Common myeloid progenitor, CD34-positive (primary cell): ENCODE measurements at regions of chr11 and their contacts with region 1.

Region 1: GRCh38 chr11:96464700-96465307 is 75.0 kb downstream of the JRKL start:
- DNase-seq: peak; percentile 66 to 81 (median 77)
- H3K4me3 ChIP-seq: peak overlapping the region in 2 of 7 experiments; percentile 28 to 59
- H3K27ac ChIP-seq: no peak overlapping the region
- H3K4me1 ChIP-seq: peaks cover 0 to 3% (median 2%) of the 10 kb centered on the region in 4 experiments
- H3K27me3 ChIP-seq: peaks cover 0 to 2% (median 0%) of the 10 kb centered on the region in 5 experiments

Region 2: DNA sequence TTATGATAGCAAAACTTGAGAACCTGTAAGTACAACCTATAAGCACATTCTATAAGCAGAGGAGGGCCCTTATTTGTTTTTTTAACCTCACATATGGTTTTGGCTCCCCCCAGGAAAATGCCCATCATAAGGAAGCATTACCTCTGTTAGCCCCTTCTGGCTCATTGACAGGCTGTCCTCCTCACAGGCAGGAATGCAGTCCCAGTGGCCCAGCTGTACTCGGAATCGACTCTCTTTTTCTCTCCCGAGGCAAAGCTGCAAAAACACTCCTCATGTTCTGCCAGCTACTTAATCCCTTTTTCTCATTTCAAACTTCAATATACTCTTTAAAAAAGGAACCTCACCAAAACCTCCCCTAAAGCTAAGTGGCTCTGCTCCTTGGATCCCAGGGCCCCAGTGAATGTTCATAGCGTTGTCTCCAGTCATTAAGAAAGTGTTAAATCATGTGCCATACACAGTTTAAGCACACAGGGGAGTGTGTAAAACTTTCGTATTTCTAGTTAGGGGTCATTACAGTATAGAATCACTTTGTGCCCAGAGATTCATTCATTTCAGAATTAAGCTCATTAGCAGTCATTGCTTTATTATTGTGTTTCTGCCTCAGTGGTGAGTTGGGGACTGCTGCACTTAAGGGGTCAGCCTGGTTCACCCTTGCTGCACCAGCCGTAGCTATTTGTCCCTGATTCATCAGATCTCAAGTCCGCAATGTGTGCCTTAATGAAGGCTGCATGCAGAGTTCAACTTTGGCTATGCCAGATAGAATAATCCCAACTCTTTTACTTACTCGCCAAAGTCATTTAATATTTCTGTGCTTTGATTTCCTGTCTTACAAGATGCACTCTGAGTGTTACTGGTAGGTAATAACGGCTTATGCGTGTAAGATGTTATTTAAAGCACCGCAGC is 17.3 kb before region 1 on chr11:
- CTCF ChIA-PET with region 1: interaction called, 10 read pairs
- POLR2A ChIA-PET with region 1: no interaction called
- DNase-seq: no peak
- H3K4me3 ChIP-seq: no peak overlapping the region
- H3K27ac ChIP-seq: no peak overlapping the region
- H3K4me1 ChIP-seq: no peaks in the 10 kb centered on the region
- H3K27me3 ChIP-seq: peaks cover 0 to 6% (median 0%) of the 10 kb centered on the region in 5 experiments

Region 3: DNA sequence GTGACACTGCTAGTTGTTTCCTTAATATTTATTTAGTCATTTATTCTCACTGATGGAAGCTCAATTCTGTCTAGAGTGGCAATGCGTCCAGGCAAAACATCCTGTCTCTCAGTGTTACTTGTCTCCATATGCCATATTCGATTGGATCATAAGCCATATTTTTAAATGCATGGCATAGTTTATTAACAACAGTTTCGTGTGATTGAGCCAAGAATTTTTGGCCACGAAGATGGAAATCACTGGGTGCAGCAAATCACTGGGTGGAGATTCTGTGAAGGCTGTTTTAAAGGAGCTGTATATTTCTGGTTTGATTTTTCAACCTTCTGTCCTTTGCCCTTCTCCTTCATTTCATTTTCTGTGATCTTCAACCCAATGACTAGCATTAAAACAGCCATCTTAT is 130.2 kb after region 1 on chr11:
- CTCF ChIA-PET with region 1: no interaction called
- POLR2A ChIA-PET with region 1: no interaction called
- DNase-seq: no peak
- H3K4me3 ChIP-seq: no peak overlapping the region
- H3K27ac ChIP-seq: no peak overlapping the region
- H3K4me1 ChIP-seq: no peaks in the 10 kb centered on the region
- H3K27me3 ChIP-seq: peaks cover 0 to 2% (median 0%) of the 10 kb centered on the region in 5 experiments

Region 4: DNA sequence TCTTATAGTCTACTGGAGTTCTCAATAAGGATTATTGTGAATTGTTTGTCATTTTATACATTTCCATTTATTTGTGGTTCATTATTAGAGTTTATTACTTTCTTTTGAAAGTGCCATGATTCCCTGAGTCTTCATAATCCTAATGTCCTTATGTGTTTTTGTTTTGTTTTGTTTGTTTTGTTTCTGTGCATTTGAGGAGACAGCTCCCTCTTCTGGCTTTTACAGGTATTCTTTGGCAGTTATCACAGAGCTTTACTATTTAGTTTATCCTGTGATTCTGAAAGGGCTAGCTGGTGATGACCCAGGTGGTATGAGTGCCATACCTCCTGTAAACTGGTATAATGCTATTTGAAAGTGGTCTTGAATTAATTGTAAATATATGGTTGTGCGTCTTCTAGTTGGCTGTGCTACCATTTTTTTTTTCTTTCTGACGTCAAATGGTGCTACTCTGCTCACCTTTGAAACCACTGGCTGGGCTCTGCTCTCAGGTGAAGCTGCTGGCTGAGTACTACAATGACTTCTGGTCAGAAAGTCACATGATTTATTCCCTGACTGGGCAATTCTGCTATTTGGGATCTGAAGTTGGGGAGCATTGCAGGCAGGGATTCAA is 676.2 kb after region 1 on chr11:
- CTCF ChIA-PET with region 1: interaction called, 12 read pairs
- POLR2A ChIA-PET with region 1: no interaction called
- DNase-seq: peak in 2 of 3 donors; percentile 24 to 27
- H3K4me3 ChIP-seq: no peak overlapping the region
- H3K27ac ChIP-seq: no peak overlapping the region
- H3K4me1 ChIP-seq: no peaks in the 10 kb centered on the region
- H3K27me3 ChIP-seq: no peaks in the 10 kb centered on the region